ENCODE measurements at regions of chr11 and their contacts with region 1.

Region 1: GRCh38 chr11:72030472-72031045 is 31.9 kb downstream of the IL18BP start:
- DNase-seq: no peak
- H3K4me3 Mint-ChIP-seq: no peak overlapping the region
- H3K27ac Mint-ChIP-seq: no peak overlapping the region
- H3K4me1 Mint-ChIP-seq: peaks cover 2% of the 10 kb centered on the region
- H3K27me3 Mint-ChIP-seq: no peaks in the 10 kb centered on the region
- CTCF ChIP-seq: no peak

Region 2: DNA sequence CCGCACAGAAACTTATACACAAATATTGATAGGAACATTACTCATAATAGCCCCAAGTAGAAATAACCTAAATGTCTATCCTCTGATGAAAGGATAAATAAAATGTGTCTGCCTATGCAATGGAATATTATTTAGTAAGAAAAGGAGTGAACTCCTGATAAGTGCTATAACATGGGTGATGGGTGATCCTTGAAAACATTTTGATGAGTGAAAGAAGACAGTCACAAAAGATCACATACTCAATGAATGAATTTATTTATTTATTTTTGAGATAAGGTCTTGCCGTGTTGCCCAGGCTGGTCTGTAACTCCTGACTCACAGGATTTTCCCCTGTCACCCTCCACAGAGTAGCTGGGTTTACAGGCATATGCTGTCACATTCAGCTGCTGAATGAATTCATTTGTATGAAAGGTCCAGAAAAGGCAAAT is 84.4 kb before region 1 on chr11:
- CTCF ChIA-PET with region 1: no interaction called
- intact Hi-C with region 1: no loop called
- DNase-seq: no peak
- H3K4me3 Mint-ChIP-seq: no peak overlapping the region
- H3K27ac Mint-ChIP-seq: no peak overlapping the region
- H3K4me1 Mint-ChIP-seq: peaks cover 48% of the 10 kb centered on the region
- H3K27me3 Mint-ChIP-seq: no peaks in the 10 kb centered on the region
- CTCF ChIP-seq: no peak

Region 3: DNA sequence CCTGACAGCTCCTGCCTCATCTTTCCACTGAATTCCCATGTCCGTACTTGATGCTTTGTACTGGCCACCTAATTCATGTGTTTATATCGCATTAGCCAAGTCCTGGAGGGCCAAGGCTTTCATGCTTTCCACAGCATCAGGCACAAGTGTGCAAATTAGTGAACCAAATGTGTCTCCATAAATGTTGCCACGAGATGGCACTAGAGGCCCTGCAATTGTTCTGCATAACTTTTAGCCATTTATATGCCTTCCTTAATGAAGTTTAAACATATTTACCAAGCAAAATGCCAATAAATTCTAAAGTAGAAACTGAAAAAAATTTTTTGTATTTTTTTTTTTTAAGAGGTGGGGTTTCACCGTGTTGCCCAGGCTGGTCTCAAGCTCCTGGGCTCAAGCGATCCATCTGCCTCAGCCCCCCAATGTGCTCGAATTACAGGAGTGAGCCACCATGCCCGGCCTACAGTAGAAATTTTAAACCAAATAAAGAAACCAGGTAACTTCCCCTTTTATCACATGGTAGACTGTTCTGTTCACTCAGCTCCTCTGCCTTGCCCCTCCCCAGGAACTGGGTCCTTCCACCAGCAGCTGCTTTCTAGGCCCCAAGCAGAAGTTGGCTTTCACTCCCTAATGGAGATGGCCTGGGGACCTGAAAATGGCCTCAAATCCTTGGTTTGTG is 52.7 kb before region 1 on chr11:
- CTCF ChIA-PET with region 1: no interaction called
- intact Hi-C with region 1: loop called (anchors 2 kb)
- DNase-seq: peak; percentile 59
- H3K4me3 Mint-ChIP-seq: no peak overlapping the region
- H3K27ac Mint-ChIP-seq: no peak overlapping the region
- H3K4me1 Mint-ChIP-seq: no peaks in the 10 kb centered on the region
- H3K27me3 Mint-ChIP-seq: no peaks in the 10 kb centered on the region
- CTCF ChIP-seq: peak; percentile 42

Region 4: GRCh38 chr11:71991494-71991893 is 39.1 kb before region 1 on chr11:
- CTCF ChIA-PET with region 1: no interaction called
- intact Hi-C with region 1: no loop called
- DNase-seq: no peak
- H3K4me3 Mint-ChIP-seq: no peak overlapping the region
- H3K27ac Mint-ChIP-seq: no peak overlapping the region
- H3K4me1 Mint-ChIP-seq: no peaks in the 10 kb centered on the region
- H3K27me3 Mint-ChIP-seq: no peaks in the 10 kb centered on the region
- CTCF ChIP-seq: no peak

Region 5: GRCh38 chr11:72091005-72091691 is 60.6 kb after region 1 on chr11:
- CTCF ChIA-PET with region 1: interaction called, 40 read pairs
- intact Hi-C with region 1: loop called (anchors 1 kb)
- DNase-seq: peak; percentile 70
- H3K4me3 Mint-ChIP-seq: no peak overlapping the region
- H3K27ac Mint-ChIP-seq: no peak overlapping the region
- H3K4me1 Mint-ChIP-seq: peaks cover 10% of the 10 kb centered on the region
- H3K27me3 Mint-ChIP-seq: no peaks in the 10 kb centered on the region
- CTCF ChIP-seq: peak; percentile 76

Region 6: DNA sequence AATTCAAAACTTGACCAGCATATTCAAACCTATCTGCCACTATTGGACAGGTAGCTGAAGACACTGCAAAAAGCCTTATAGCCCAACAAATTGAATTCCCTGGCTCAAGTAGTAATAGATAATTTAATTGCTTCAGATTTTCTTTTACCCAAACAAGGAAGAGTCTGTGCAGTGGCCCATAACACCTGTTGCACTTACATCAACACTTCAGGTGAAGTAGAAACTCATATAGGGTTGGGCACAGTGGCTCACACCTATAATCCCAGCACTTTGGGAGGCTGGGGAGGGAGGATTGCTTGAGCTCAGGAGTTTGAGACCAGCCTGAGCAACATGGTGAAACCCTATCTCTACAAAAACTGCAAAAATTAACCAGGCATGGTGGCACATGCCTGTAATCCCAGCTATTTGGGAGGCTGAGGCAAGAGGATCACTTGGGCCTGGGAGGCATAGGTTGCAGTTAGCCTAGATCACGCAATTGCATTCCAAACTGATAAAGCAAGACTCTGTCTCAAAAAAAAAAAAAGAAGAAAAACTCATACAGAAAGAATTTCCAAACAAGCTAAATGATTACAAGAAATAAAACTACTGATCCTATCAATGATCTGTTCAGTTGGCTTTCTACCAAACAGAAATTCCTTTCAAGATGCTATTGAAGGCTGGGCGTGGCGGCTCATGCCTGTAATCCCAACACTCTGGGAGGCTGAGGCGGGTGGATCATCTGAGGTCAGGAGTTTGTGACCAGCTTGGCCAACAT is 114.4 kb after region 1 on chr11:
- CTCF ChIA-PET with region 1: interaction called, 30 read pairs
- intact Hi-C with region 1: no loop called
- DNase-seq: peak; percentile 51
- H3K4me3 Mint-ChIP-seq: no peak overlapping the region
- H3K27ac Mint-ChIP-seq: no peak overlapping the region
- H3K4me1 Mint-ChIP-seq: peaks cover 14% of the 10 kb centered on the region
- H3K27me3 Mint-ChIP-seq: peaks cover 16% of the 10 kb centered on the region
- CTCF ChIP-seq: no peak

Region 7: DNA sequence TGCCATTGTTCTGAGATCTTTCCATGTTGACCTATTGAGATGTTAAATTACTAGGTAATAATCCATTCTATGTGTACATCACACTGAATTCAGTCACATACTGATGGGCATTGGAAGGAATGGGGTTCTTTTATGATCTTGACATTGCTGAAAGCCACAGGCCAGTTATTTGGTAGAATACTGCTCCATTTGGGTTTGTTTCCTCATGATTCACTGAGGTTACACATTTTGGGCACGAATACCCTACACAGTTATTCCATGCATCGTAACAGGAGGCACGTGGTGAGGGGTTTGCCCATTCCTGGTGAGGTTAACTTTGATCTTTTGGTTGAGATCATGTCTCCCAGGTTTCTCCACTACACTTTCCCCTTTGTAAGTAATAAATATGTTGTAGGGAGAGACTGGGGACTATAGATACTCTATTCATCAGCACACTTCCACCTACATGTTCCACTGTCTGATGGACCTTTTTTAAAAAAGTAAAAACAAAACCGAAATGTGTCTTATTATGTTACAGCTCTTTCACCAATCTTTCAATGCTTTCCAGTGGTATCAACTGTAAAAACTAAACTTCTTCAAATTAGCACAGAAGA is 149.3 kb after region 1 on chr11:
- CTCF ChIA-PET with region 1: interaction called, 9 read pairs
- intact Hi-C with region 1: loop called (anchors 5 kb)
- DNase-seq: no peak
- H3K4me3 Mint-ChIP-seq: no peak overlapping the region
- H3K27ac Mint-ChIP-seq: no peak overlapping the region
- H3K4me1 Mint-ChIP-seq: peaks cover 12% of the 10 kb centered on the region
- H3K27me3 Mint-ChIP-seq: peaks cover 15% of the 10 kb centered on the region
- CTCF ChIP-seq: no peak

Region 8: DNA sequence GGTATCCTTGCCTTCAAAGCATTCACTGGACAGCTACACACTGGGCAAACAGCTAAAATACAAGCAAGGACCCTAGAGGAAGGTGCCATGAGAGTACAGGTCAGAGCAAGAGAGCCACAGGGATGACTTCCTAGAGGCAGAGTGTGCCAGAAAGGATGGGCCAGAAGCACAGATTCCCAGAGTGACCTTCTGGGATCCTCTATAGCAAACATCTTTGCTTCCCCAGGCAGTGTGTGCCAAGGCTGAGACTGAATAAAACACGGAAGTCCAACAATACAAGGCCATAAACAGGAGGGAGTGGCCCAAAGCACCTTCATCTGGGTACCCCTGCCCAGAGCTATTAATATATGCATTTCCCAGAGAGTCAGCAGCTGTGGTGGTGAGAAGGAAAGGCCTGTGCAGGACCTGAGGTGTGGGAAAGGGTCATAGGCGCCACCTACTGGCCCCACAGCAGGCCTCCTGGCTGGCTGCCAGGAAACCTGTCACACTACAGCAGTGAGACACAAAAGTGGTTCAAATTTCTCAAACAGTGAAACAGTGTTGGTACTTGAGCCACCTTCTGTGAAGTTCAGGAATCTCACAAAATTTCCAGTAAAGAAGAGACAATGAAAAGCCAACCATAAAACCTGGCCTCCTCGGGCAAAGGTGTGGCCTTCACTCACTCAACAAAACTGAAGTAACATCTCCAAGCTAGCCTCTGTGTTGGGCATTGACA is 383.5 kb after region 1 on chr11:
- CTCF ChIA-PET with region 1: interaction called, 6 read pairs
- intact Hi-C with region 1: loop called (anchors 5 kb)
- DNase-seq: peak; percentile 86
- H3K4me3 Mint-ChIP-seq: no peak overlapping the region
- H3K27ac Mint-ChIP-seq: no peak overlapping the region
- H3K4me1 Mint-ChIP-seq: peaks cover 22% of the 10 kb centered on the region
- H3K27me3 Mint-ChIP-seq: no peaks in the 10 kb centered on the region
- CTCF ChIP-seq: peak; percentile 80

Region 9: GRCh38 chr11:72430741-72431570 is 400.4 kb after region 1 on chr11:
- CTCF ChIA-PET with region 1: interaction called, 17 read pairs
- intact Hi-C with region 1: loop called (anchors 5 kb)
- DNase-seq: peak; percentile 41
- H3K4me3 Mint-ChIP-seq: no peak overlapping the region
- H3K27ac Mint-ChIP-seq: no peak overlapping the region
- H3K4me1 Mint-ChIP-seq: peaks cover 21% of the 10 kb centered on the region
- H3K27me3 Mint-ChIP-seq: no peaks in the 10 kb centered on the region
- CTCF ChIP-seq: peak; percentile 70

Region 10: DNA sequence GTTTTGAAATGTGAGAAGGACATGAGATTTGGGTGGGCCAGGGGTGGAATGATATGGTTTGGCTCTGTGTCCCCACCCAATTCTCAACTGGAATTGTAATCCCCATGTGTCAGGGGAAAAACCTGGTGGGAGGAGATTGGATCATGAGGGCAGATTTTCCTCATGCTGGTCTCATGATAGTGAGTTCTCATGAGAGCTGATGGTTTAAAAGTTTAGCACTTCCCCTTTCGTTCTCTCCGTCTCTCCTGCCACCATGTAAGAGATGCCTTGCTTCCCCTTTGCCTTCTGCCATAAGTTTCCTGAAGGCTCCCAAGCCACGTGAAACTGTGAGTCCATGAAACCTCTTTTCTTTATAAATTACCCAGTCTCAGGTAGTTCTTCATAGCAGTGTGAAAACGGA is 998.1 kb after region 1 on chr11:
- CTCF ChIA-PET with region 1: no interaction called
- intact Hi-C with region 1: no loop called
- DNase-seq: no peak
- H3K4me3 Mint-ChIP-seq: no peak overlapping the region
- H3K27ac Mint-ChIP-seq: no peak overlapping the region
- H3K4me1 Mint-ChIP-seq: no peaks in the 10 kb centered on the region
- H3K27me3 Mint-ChIP-seq: no peaks in the 10 kb centered on the region
- CTCF ChIP-seq: no peak

Measured in Calu3 (cell line).